Activated CD4-positive, alpha-beta T cell treated with anti-CD3 and anti-CD28 coated beads, Interleukin-2, amount 10 ng/mL, durations not matched to agents 24 days and 14 days (primary cell): ENCODE measurements at regions of chr17 and their contacts with region 1.

Region 1: GRCh38 chr17:29568331-29569244 is at the start of gene TP53I13:
- DNase-seq: peak; percentile 96
- H3K4me3 Mint-ChIP-seq: peak within 1 kb of the TSS; percentile 93
- H3K27ac Mint-ChIP-seq: peak within 1 kb of the TSS; percentile 94
- H3K4me1 Mint-ChIP-seq: peaks cover 27% of the 10 kb centered on the region
- H3K27me3 Mint-ChIP-seq: no peaks in the 10 kb centered on the region
- total RNA-seq, gene TP53I13: 69.7 and 77.9 TPM in 2 replicates

Region 2: GRCh38 chr17:29293890-29294579 is 274.6 kb before region 1 on chr17 and contains the start of gene NUFIP2:
- intact Hi-C with region 1: loop called (anchors 5 kb)
- DNase-seq: peak; percentile 99
- H3K4me3 Mint-ChIP-seq: peak within 1 kb of the TSS; percentile 99
- H3K27ac Mint-ChIP-seq: peak within 1 kb of the TSS; percentile 99
- H3K4me1 Mint-ChIP-seq: peaks cover 28% of the 10 kb centered on the region
- H3K27me3 Mint-ChIP-seq: no peaks in the 10 kb centered on the region
- total RNA-seq, gene NUFIP2: 83.2 and 89.7 TPM in 2 replicates

Region 3: DNA sequence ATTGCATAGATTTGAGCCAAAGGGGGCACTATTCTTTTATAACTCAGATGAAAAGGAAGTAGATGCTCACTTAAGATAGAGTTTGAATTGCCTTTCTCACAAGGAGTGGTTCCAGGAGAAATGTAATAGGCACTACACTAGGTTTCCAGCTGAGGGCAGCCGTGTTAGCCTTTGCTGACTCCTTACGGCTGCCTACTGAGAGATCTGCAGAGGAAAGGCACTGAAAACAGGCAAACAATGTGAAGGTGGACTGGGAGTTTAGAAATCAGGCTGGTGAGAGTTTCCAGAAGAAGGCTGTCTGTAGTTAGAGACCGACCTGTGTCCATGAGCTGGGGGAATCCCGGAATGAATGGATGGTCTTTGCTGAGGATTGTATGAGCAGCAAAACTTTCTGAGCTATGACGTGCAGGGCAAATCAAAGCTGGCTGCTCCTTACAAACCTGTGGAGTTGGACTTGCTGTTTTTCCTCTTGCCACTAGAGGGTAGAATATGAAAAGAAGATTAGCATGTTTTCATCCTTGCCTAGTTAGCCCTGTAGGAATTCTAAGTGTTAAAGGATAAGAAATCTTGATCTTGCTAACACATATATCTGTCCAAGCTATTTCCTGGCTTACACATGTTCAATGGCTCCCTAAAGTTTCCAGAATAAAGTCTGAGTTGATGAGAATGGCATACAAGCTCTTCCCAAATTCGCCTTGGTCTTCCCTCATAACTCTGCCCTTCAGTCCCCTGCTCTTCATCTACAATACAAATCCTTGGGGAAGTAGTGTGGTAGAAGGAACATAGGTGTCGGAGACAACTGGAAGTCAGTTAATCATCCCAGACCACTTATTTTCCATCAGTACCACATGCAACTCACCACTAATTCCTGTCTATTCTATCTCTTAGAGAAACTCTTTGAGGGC is 198.5 kb before region 1 on chr17:
- intact Hi-C with region 1: loop called (anchors 10 kb)
- DNase-seq: peak; percentile 82
- H3K4me3 Mint-ChIP-seq: no peak overlapping the region
- H3K27ac Mint-ChIP-seq: no peak overlapping the region
- H3K4me1 Mint-ChIP-seq: no peaks in the 10 kb centered on the region
- H3K27me3 Mint-ChIP-seq: peaks cover under 1% of the 10 kb centered on the region

Region 4: DNA sequence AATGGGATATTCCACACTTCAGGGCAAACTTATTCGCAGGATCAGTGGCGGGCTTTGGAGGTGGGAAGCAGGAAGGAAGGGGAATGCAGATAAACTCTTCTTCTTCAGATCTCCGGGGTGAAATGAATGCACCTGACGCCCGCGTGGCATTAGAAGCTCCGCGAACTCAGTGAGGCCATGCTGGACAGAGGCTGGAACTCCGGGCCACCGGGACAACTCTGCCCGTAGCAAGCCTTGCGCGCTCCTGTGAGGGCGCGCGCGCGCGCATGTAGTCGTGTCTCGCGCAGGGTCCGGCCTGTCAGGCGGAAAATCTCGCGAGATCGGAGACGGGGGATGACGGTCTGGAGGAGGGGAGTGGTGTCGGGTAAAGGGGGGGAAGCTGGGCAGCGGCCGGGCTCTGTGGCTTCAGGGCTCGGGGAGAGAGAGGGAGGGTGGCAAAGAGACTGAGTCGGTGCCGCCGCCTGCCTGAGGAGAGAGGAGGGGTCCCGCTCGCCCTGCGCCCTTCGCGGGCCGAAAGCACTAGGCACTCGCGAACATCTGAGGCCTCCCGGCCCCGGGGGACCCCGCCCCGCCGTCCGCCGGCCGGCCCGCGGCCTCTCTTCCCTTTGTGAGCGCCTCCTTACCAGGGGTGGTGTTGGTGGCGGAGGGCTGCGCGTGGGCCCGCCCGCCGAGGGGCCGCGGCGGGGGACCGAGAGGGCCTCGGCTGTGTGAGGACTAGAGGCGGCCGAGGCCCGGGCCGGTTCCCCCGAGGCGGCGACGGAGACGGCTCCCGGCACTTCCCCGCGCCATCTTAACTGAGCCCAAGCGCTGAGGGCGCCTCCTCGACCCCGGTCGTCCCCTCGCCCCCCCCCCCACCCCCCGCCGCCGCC is 178.4 kb before region 1 on chr17 and contains the start of gene TAOK1:
- intact Hi-C with region 1: loop called (anchors 2 kb)
- DNase-seq: peak; percentile 99
- H3K4me3 Mint-ChIP-seq: peak within 1 kb of the TSS; percentile 95
- H3K27ac Mint-ChIP-seq: peak within 1 kb of the TSS; percentile 95
- H3K4me1 Mint-ChIP-seq: peaks cover 32% of the 10 kb centered on the region
- H3K27me3 Mint-ChIP-seq: no peaks in the 10 kb centered on the region
- total RNA-seq, gene TAOK1: 42.7 and 43.2 TPM in 2 replicates

Region 5: DNA sequence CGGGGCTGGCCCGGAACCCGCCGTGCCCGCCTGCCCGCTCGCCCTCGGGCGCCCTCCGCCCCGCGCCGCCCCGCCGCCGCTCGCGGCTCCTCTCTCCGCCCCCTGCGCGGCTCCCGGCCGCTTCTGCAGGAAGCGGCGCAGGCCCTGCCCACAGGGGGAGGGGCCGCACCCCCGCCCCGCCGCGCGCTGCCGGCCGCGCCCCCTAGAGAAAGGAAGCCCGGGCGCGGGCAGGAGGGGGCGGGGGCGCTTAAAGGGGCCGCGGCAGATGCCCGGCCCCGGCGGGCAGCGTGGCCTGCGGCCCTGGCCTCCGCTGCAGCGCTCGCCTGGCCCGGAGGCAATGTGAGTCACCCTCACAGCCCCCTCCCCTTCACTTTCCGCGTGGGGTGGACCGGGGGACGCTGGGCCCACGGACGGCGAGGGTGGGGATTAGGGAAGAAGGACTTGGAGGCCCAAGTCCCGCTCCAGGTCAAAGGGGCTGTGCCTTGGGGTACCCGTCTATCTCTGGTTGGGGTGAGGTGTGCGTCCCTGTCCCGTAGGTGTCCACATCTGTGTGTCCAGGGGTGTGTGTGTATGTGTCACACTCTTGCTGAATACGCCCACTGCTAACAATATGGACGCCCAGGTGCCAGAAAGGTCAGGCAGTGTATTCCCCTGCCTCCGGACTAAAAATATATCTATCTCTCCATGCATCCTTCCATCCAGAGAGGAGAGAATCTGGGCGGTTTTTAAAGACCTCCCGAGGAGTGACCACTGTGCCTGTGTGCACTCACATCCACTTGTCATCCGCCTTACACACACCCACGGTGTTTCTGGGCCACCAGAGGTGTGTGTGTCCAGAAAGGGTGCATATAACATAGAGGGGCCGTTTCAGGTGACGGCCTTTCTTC is 21.2 kb after region 1 on chr17 and contains the start of gene GIT1:
- intact Hi-C with region 1: loop called (anchors 1 kb)
- DNase-seq: peak; percentile 96
- H3K4me3 Mint-ChIP-seq: peak within 1 kb of the TSS; percentile 92
- H3K27ac Mint-ChIP-seq: peak within 1 kb of the TSS; percentile 95
- H3K4me1 Mint-ChIP-seq: peaks cover 52% of the 10 kb centered on the region
- H3K27me3 Mint-ChIP-seq: no peaks in the 10 kb centered on the region
- total RNA-seq, gene GIT1: 91.3 and 91.4 TPM in 2 replicates

Region 6: GRCh38 chr17:29617125-29617480 is 48.5 kb after region 1 on chr17:
- intact Hi-C with region 1: loop called (anchors 1 kb)
- DNase-seq: peak; percentile 97
- H3K4me3 Mint-ChIP-seq: peak overlapping the region; percentile 83
- H3K27ac Mint-ChIP-seq: peak overlapping the region; percentile 93
- H3K4me1 Mint-ChIP-seq: peaks cover 38% of the 10 kb centered on the region
- H3K27me3 Mint-ChIP-seq: peaks cover 6% of the 10 kb centered on the region